H1 (cell line): ENCODE measurements at regions of chr15 and their contacts with region 1.

Region 1: GRCh38 chr15:91108421-91108820 is 8.4 kb downstream of the SV2B start:
- DNase-seq: no peak
- H3K4me3 ChIP-seq: no peak overlapping the region
- H3K27ac ChIP-seq: no peak overlapping the region
- H3K4me1 ChIP-seq: peaks cover 0 to 4% (median 0%) of the 10 kb centered on the region in 4 experiments; a peak in 3 of 7 replicates
- H3K27me3 ChIP-seq: peaks cover 0 to 2% (median under 1%) of the 10 kb centered on the region in 4 experiments; a peak in 2 of 7 replicates
- CTCF ChIP-seq: no peak
- EP300 ChIP-seq: no peak
- POLR2A ChIP-seq: no peak
- RAD21 ChIP-seq: no peak

Region 2: GRCh38 chr15:90860942-90861675 is 247.3 kb before region 1 on chr15:
- CTCF ChIA-PET with region 1: no interaction called
- POLR2A ChIA-PET with region 1: no interaction called
- DNase-seq: no peak
- H3K4me3 ChIP-seq: no peak overlapping the region
- H3K27ac ChIP-seq: no peak overlapping the region
- H3K4me1 ChIP-seq: peaks cover 0 to 8% (median 5%) of the 10 kb centered on the region in 4 experiments; a peak in 6 of 7 replicates
- H3K27me3 ChIP-seq: no peaks in the 10 kb centered on the region
- CTCF ChIP-seq: no peak
- EP300 ChIP-seq: no peak
- POLR2A ChIP-seq: no peak
- RAD21 ChIP-seq: no peak

Region 3: GRCh38 chr15:91118796-91119590 is 10.6 kb after region 1 on chr15:
- CTCF ChIA-PET with region 1: interaction called, 12 read pairs
- POLR2A ChIA-PET with region 1: interaction called, 3 read pairs
- DNase-seq: no peak
- H3K4me3 ChIP-seq: no peak overlapping the region
- H3K27ac ChIP-seq: no peak overlapping the region
- H3K4me1 ChIP-seq: no peaks in the 10 kb centered on the region
- H3K27me3 ChIP-seq: no peaks in the 10 kb centered on the region
- CTCF ChIP-seq: no peak
- EP300 ChIP-seq: no peak
- POLR2A ChIP-seq: no peak
- RAD21 ChIP-seq: no peak